Activated B cell treated with CpG ODN at 0.5 μM for 24 hours (primary cell): ENCODE measurements at regions of chr15 and their contacts with region 1.

Region 1: GRCh38 chr15:50765195-50765973 is at the start of gene SPPL2A:
- DNase-seq: peak; percentile 87
- ATAC-seq: peak; percentile 94
- H3K4me3 Mint-ChIP-seq: peak within 1 kb of the TSS; percentile 97
- H3K27ac Mint-ChIP-seq: peak within 1 kb of the TSS; percentile 95
- H3K4me1 Mint-ChIP-seq: peaks cover 48% of the 10 kb centered on the region
- H3K27me3 Mint-ChIP-seq: no peaks in the 10 kb centered on the region
- CTCF ChIP-seq: no peak
- total RNA-seq, gene SPPL2A: 79.1 and 85.3 TPM in 2 replicates

Region 2: GRCh38 chr15:49155110-49155833 is 1610.1 kb before region 1 on chr15 and contains the start of gene COPS2:
- CTCF ChIA-PET with region 1: no interaction called
- POLR2A ChIA-PET with region 1: no interaction called
- intact Hi-C with region 1: loop called (anchors 5 kb)
- DNase-seq: peak; percentile 78
- ATAC-seq: peak; percentile 93
- H3K4me3 Mint-ChIP-seq: peak within 1 kb of the TSS; percentile 95
- H3K27ac Mint-ChIP-seq: peak within 1 kb of the TSS; percentile 95
- H3K4me1 Mint-ChIP-seq: peaks cover 43% of the 10 kb centered on the region
- H3K27me3 Mint-ChIP-seq: no peaks in the 10 kb centered on the region
- CTCF ChIP-seq: no peak
- total RNA-seq, gene COPS2: 53.1 and 54.4 TPM in 2 replicates

Region 3: GRCh38 chr15:50424066-50424890 is 341.1 kb before region 1 on chr15 and contains the start of gene USP8:
- CTCF ChIA-PET with region 1: no interaction called
- POLR2A ChIA-PET with region 1: interaction called, 3 read pairs
- intact Hi-C with region 1: loop called (anchors 1 kb)
- DNase-seq: peak; percentile 90
- ATAC-seq: peak; percentile 98
- H3K4me3 Mint-ChIP-seq: peak within 1 kb of the TSS; percentile 90
- H3K27ac Mint-ChIP-seq: peak within 1 kb of the TSS; percentile 89
- H3K4me1 Mint-ChIP-seq: peaks cover 44% of the 10 kb centered on the region
- H3K27me3 Mint-ChIP-seq: no peaks in the 10 kb centered on the region
- CTCF ChIP-seq: no peak
- total RNA-seq, gene USP8: 71.3 and 78.3 TPM in 2 replicates

Region 4: GRCh38 chr15:50531766-50532165 is 233.6 kb before region 1 on chr15:
- CTCF ChIA-PET with region 1: no interaction called
- POLR2A ChIA-PET with region 1: no interaction called
- intact Hi-C with region 1: no loop called
- DNase-seq: no peak
- ATAC-seq: no peak
- H3K4me3 Mint-ChIP-seq: no peak overlapping the region
- H3K27ac Mint-ChIP-seq: no peak overlapping the region
- H3K4me1 Mint-ChIP-seq: no peaks in the 10 kb centered on the region
- H3K27me3 Mint-ChIP-seq: no peaks in the 10 kb centered on the region
- CTCF ChIP-seq: no peak

Region 5: GRCh38 chr15:50686468-50687301 is 78.7 kb before region 1 on chr15 and contains the start of gene TRPM7:
- CTCF ChIA-PET with region 1: no interaction called
- POLR2A ChIA-PET with region 1: interaction called, 9 read pairs
- intact Hi-C with region 1: loop called (anchors 1 kb)
- DNase-seq: peak; percentile 92
- ATAC-seq: peak; percentile 80
- H3K4me3 Mint-ChIP-seq: peak within 1 kb of the TSS; percentile 99
- H3K27ac Mint-ChIP-seq: peak within 1 kb of the TSS; percentile 92
- H3K4me1 Mint-ChIP-seq: peaks cover 58% of the 10 kb centered on the region
- H3K27me3 Mint-ChIP-seq: no peaks in the 10 kb centered on the region
- CTCF ChIP-seq: no peak
- total RNA-seq, gene TRPM7: 59.4 and 64.7 TPM in 2 replicates

Region 6: DNA sequence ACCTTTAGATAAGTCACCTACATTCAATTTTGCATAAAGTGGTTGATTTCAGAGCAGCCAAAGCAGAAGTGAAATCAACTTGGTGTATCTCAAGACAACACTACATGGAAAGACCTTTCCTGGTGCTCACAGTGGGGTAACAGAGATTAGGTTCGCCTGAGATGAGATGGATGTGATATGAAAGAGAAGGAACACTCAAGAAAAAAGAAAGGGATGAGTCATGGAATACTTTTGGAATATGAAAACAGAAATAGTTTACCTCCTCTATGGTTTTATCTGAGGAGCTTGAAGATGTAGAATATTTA is 89.7 kb after region 1 on chr15:
- CTCF ChIA-PET with region 1: no interaction called
- POLR2A ChIA-PET with region 1: interaction called, 3 read pairs
- intact Hi-C with region 1: loop called (anchors 1 kb)
- DNase-seq: no peak
- ATAC-seq: peak; percentile 94
- H3K4me3 Mint-ChIP-seq: no peak overlapping the region
- H3K27ac Mint-ChIP-seq: peak overlapping the region; percentile 36
- H3K4me1 Mint-ChIP-seq: peaks cover 16% of the 10 kb centered on the region
- H3K27me3 Mint-ChIP-seq: peaks cover 3% of the 10 kb centered on the region
- CTCF ChIP-seq: no peak

Region 7: GRCh38 chr15:50876989-50877360 is 111.6 kb after region 1 on chr15:
- CTCF ChIA-PET with region 1: interaction called, 4 read pairs
- POLR2A ChIA-PET with region 1: interaction called, 10 read pairs
- intact Hi-C with region 1: loop called (anchors 2 kb)
- DNase-seq: peak; percentile 27
- ATAC-seq: peak; percentile 45
- H3K4me3 Mint-ChIP-seq: peak overlapping the region; percentile 82
- H3K27ac Mint-ChIP-seq: peak overlapping the region; percentile 27
- H3K4me1 Mint-ChIP-seq: peaks cover 39% of the 10 kb centered on the region
- H3K27me3 Mint-ChIP-seq: peaks cover 4% of the 10 kb centered on the region
- CTCF ChIP-seq: peak; percentile 98

Region 8: DNA sequence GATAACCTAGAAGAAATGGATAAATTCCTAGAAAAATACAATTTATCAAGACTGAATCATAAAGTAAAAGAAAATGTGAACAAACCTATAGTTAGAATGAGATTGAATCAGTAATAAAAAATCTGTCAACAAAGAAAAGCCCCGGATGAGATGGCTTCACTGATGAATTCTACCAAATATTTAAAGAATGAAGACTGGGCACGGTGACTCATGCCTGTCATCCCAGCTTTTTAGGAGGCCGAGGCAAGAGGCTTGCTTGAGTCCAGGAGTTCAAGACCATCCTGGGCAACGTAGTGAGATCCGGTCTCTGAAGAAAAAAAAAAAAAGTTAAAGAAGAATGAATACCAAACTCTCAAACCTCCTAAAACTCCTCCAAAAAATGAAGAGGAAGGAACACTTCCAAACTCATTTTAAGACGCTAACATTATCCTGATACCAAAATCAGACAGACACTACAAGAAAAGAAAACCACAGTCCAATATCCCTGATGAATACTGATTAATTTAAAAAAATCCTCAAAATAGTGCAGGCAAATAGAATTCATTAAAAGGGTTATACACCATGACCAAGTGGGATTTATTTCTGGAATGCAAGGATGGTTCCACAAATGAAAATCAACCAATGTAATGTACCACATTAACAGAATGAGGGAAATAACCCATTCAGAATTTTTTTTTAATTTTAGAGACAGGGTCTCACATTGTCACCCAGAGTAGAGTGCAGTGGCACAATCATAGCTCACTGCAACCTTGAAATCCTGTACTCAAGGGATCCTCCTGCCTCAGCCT is 125.6 kb after region 1 on chr15:
- CTCF ChIA-PET with region 1: no interaction called
- POLR2A ChIA-PET with region 1: no interaction called
- intact Hi-C with region 1: loop called (anchors 1 kb)
- DNase-seq: no peak
- ATAC-seq: no peak
- H3K4me3 Mint-ChIP-seq: no peak overlapping the region
- H3K27ac Mint-ChIP-seq: no peak overlapping the region
- H3K4me1 Mint-ChIP-seq: peaks cover 2% of the 10 kb centered on the region
- H3K27me3 Mint-ChIP-seq: no peaks in the 10 kb centered on the region
- CTCF ChIP-seq: no peak